ENCODE measurements at regions of chr10 and their contacts with region 1.

Region 1: GRCh38 chr10:116669832-116670644 is 49.3 kb downstream of the PNLIPRP2 start:
- H3K4me3 ChIP-seq: peak overlapping the region; percentile 32
- H3K27ac ChIP-seq: no peak overlapping the region
- H3K4me1 ChIP-seq: peaks cover 3% of the 10 kb centered on the region; the same call in 1 of the 2 replicates
- CTCF ChIP-seq: no peak

Region 2: GRCh38 chr10:116683821-116684220 is 13.8 kb after region 1 on chr10:
- CTCF ChIA-PET with region 1: interaction called, 18 read pairs
- POLR2A ChIA-PET with region 1: no interaction called
- H3K4me3 ChIP-seq: no peak overlapping the region
- H3K27ac ChIP-seq: no peak overlapping the region
- H3K4me1 ChIP-seq: no peaks in the 10 kb centered on the region
- CTCF ChIP-seq: no peak

Region 3: GRCh38 chr10:116694243-116694926 is 24.3 kb after region 1 on chr10:
- CTCF ChIA-PET with region 1: no interaction called
- POLR2A ChIA-PET with region 1: no interaction called
- H3K4me3 ChIP-seq: no peak overlapping the region
- H3K27ac ChIP-seq: no peak overlapping the region
- H3K4me1 ChIP-seq: no peaks in the 10 kb centered on the region
- CTCF ChIP-seq: no peak

Measured in HEK293 (cell line).